SK-N-SH (cell line): ENCODE measurements at regions of chr17 and their contacts with region 1.

Region 1: DNA sequence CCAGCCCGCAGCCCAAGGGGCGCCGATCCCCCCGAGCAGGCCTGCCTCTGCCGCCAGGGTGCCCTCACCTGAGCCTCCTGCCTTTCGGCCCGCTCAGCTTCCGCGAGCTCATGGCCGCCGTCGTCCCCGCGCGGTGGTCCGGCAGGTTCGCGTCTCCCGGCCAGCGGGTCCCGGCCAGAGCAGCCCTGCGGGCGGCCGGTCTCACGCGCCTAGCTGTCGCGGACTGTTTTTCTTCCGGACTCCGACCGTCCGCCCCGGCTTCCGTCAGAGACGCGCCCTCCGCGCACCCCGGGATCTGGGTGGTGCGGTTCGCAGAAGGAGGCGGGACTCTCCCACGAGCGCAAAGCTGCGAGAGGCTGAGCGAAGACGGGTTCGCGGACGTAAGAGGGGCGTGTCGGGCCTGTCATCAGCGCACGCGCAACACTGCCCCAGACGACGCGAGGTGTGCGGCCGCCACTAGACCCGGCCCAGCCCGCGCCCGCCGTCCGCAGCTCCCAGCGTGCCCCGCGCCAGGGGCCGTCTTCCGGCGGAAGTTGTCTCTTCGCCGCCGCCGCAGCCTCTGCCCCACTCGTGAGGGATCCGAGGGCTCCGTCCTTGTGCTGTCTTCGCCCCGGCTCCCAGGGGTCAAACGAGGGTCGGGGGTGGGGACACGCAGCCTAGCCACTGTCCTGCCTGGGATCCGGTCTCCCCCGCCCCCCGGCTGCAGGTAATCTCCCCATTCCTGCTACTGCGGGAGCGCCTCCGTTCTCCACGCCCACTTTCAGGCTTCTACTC is at the start of gene INPP5K:
- DNase-seq: peak; percentile 99
- H3K4me3 ChIP-seq: peak within 1 kb of the TSS; percentile 100
- H3K27ac ChIP-seq: peak within 1 kb of the TSS; percentile 78 to 86
- H3K4me1 ChIP-seq: peaks cover 0 to 19% of the 10 kb centered on the region in 2 experiments; a peak in 2 of 4 replicates
- H3K27me3 ChIP-seq: no peaks in the 10 kb centered on the region
- CTCF ChIP-seq: no peak
- EP300 ChIP-seq: no peak; a peak in 1 of 4 replicates
- RAD21 ChIP-seq: no peak
- polyA plus RNA-seq, gene INPP5K: 26.2 and 28.6 TPM in 2 replicates

Region 2: DNA sequence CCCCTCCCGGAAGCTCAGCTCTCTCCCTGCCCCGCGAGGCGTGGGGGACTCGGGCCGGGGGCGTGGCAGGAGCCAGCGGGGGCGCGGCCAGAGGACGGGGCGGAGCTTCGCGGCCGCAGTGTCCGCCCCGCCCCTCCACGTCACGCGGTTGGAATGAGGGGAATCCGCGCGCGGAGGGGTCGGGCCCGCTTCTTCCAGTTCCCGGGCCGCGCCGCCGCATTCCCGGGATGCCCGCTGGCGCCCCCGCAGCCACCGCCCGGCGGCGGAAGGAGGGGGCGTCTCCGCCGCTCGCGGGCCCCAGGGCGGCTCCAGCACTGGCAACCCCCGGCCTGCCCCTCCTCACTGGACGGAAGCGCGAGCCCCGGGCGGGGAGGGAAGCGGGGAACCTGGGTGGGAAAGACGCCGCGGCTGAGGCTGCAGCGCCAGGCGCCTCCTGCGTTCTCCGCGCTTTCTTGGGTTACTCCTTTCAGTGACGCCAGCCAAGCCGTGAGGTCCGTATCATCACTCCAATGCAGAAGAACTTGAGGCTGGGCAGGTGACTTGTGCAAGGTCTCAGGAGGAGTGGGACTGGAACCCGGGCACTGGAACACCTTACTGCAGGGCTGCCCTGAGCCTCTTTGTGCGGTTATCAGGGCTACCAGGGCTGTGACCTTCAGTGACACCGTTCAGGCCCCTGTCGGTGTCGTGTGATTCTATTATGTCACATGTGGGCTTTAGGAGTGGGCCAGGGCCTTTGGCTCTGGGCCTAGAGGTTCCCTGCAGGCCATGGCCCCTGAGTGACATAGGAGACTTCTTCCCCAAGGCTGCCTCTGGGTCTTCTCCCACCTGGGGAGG is 28.3 kb before region 1 on chr17:
- CTCF ChIA-PET with region 1: interaction called, 13 read pairs
- POLR2A ChIA-PET with region 1: interaction called, 5 read pairs
- DNase-seq: peak; percentile 94
- H3K4me3 ChIP-seq: peak overlapping the region; percentile 44 to 51
- H3K27ac ChIP-seq: peak overlapping the region; percentile 81 to 85
- H3K4me1 ChIP-seq: peaks cover 24 to 40% of the 10 kb centered on the region in 2 experiments; a peak in 2 of 4 replicates
- H3K27me3 ChIP-seq: no peaks in the 10 kb centered on the region
- CTCF ChIP-seq: no peak
- EP300 ChIP-seq: peak in 1 of 2 experiments; percentile 31; a peak in 1 of 4 replicates
- RAD21 ChIP-seq: no peak

Region 3: GRCh38 chr17:1495265-1495989 is 21.1 kb before region 1 on chr17:
- CTCF ChIA-PET with region 1: interaction called, 13 read pairs
- POLR2A ChIA-PET with region 1: interaction called, 14 read pairs
- DNase-seq: no peak
- H3K4me3 ChIP-seq: no peak overlapping the region
- H3K27ac ChIP-seq: peak overlapping the region in 1 of 2 experiments; percentile 48; a peak in 1 of 4 replicates
- H3K4me1 ChIP-seq: peaks cover 8 to 19% of the 10 kb centered on the region in 2 experiments; a peak in 3 of 4 replicates
- H3K27me3 ChIP-seq: no peaks in the 10 kb centered on the region
- CTCF ChIP-seq: no peak
- EP300 ChIP-seq: no peak
- RAD21 ChIP-seq: no peak